CD8-positive, alpha-beta T cell (primary cell): ENCODE measurements at regions of chr2 and their contacts with region 1.

Region 1: DNA sequence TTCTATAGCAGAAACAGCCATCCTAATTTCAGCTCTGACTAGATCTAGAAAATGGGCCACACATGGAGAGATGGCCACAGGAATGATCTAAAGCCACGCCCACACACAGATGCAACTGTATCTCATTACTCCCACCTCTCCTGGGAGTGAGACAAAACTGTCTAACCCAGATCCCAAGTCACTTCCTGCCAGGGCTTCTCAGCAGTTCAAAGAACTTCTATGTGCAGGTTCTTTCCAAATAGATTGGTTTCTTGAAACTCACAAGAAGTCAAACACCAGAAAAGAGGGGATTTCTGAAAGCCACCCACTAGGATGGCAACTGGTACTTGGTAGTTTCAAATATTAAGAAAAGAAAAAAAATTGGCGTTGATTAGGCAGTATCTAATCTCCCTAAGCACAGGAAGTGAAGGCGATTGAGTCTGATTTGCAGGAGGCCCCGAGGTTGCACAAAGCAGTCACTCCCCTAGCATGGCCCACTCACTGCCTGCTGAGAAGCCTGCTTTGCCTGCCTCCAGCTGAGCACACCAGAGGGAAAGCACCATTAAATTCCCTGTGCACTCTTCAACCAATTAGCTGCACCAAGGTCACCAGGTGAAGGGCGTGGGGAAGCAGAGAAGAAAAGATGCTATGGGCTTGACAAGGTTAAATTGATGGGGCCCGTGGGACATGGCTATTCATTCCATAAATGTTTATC is 51.1 kb downstream of the PAPOLG start:
- DNase-seq: peak in 6 of 9 experiments; percentile 23 to 80 (median 52)
- ATAC-seq: peak; percentile 75
- H3K4me3 ChIP-seq: no peak overlapping the region
- H3K4me3 Mint-ChIP-seq: peak overlapping the region; percentile 40
- H3K27ac ChIP-seq: peak overlapping the region; percentile 31 to 57
- H3K27ac Mint-ChIP-seq: peak overlapping the region; percentile 90
- H3K4me1 ChIP-seq: peaks cover 24% of the 10 kb centered on the region
- H3K4me1 Mint-ChIP-seq: peaks cover 41% of the 10 kb centered on the region
- H3K27me3 ChIP-seq: no peaks in the 10 kb centered on the region
- H3K27me3 Mint-ChIP-seq: no peaks in the 10 kb centered on the region
- CTCF ChIP-seq: no peak

Region 2: DNA sequence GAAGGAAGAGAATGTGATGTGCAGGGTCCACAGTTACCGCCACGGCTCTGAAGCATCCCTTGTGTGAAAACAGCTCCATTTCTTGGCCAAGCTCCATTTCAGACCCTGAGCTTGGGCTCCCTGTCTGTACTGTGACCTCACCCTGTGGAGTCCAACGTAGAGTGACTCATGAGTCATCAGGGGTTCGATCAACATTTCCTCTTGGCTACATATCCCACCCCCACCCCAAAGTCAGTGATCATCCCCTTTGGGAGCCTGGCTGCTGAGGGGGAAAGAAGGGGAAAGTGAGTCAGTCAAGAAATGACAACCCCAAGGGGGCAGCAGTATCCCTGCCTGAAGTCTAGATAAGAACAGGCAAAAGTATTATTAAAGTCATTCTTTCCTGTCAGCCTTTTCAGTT is 11.1 kb after region 1 on chr2:
- CTCF ChIA-PET with region 1: interaction called, 15 read pairs
- POLR2A ChIA-PET with region 1: interaction called, 20 read pairs
- intact Hi-C with region 1: loop called (anchors 2 kb)
- DNase-seq: peak in 5 of 9 experiments; percentile 40 to 70 (median 50)
- ATAC-seq: no peak
- H3K4me3 ChIP-seq: no peak overlapping the region
- H3K4me3 Mint-ChIP-seq: no peak overlapping the region
- H3K27ac ChIP-seq: peak overlapping the region in 1 of 2 experiments; percentile 83
- H3K27ac Mint-ChIP-seq: peak overlapping the region; percentile 78
- H3K4me1 ChIP-seq: peaks cover 32% of the 10 kb centered on the region
- H3K4me1 Mint-ChIP-seq: peaks cover 43% of the 10 kb centered on the region
- H3K27me3 ChIP-seq: no peaks in the 10 kb centered on the region
- H3K27me3 Mint-ChIP-seq: peaks cover 5% of the 10 kb centered on the region
- CTCF ChIP-seq: peak; percentile 19

Region 3: GRCh38 chr2:61006486-61007105 is 199.5 kb after region 1 on chr2:
- CTCF ChIA-PET with region 1: interaction called, 11 read pairs
- POLR2A ChIA-PET with region 1: interaction called, 3 read pairs
- intact Hi-C with region 1: no loop called
- DNase-seq: no peak
- ATAC-seq: no peak
- H3K4me3 ChIP-seq: no peak overlapping the region
- H3K4me3 Mint-ChIP-seq: no peak overlapping the region
- H3K27ac ChIP-seq: no peak overlapping the region
- H3K27ac Mint-ChIP-seq: no peak overlapping the region
- H3K4me1 ChIP-seq: no peaks in the 10 kb centered on the region
- H3K4me1 Mint-ChIP-seq: no peaks in the 10 kb centered on the region
- H3K27me3 ChIP-seq: no peaks in the 10 kb centered on the region
- H3K27me3 Mint-ChIP-seq: no peaks in the 10 kb centered on the region
- CTCF ChIP-seq: no peak